Psoas muscle (tissue), 8 donors: ENCODE measurements at regions of chr10 and their contacts with region 1.

Region 1: DNA sequence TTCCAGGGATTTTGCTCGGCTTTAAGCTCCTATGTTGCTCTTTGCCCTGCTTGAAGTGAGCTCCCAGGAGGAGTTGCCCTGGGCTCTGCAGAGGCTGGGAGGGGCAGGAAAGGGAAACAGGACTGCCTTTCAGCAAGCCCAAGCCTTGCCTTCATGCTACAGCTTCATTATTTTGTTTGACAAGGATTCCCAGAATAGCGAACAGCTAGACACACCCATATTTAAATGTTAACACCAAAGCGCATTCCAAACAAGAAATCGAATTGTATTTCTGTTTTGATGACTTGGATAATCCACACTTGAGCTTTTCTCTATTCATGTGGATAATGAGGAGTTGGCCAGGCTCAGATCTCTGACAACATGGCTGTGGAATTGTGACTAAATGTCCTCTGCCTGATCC is 6.3 kb downstream of the KIAA1217 start:
- DNase-seq: no peak
- ATAC-seq: peak; percentile 5 to 17 (median 16)
- H3K4me3 ChIP-seq: peak overlapping the region; percentile 17
- H3K27ac ChIP-seq: peak overlapping the region; percentile 93
- H3K4me1 ChIP-seq: peaks cover 72% of the 10 kb centered on the region
- H3K27me3 ChIP-seq: no peaks in the 10 kb centered on the region
- CTCF ChIP-seq: no peak

Region 2: GRCh38 chr10:24249829-24250415 is 34.7 kb after region 1 on chr10:
- intact Hi-C with region 1: loop called (anchors 5 kb)
- DNase-seq: no peak
- ATAC-seq: peak; percentile 27 to 55 (median 40)
- H3K4me3 ChIP-seq: no peak overlapping the region
- H3K27ac ChIP-seq: peak overlapping the region; percentile 69
- H3K4me1 ChIP-seq: peaks cover 59% of the 10 kb centered on the region
- H3K27me3 ChIP-seq: no peaks in the 10 kb centered on the region
- CTCF ChIP-seq: no peak

Region 3: GRCh38 chr10:24318517-24318916 is 103.3 kb after region 1 on chr10:
- intact Hi-C with region 1: no loop called
- DNase-seq: no peak
- ATAC-seq: no peak
- H3K4me3 ChIP-seq: no peak overlapping the region
- H3K27ac ChIP-seq: no peak overlapping the region
- H3K4me1 ChIP-seq: peaks cover 20% of the 10 kb centered on the region
- H3K27me3 ChIP-seq: no peaks in the 10 kb centered on the region
- CTCF ChIP-seq: no peak

Region 4: DNA sequence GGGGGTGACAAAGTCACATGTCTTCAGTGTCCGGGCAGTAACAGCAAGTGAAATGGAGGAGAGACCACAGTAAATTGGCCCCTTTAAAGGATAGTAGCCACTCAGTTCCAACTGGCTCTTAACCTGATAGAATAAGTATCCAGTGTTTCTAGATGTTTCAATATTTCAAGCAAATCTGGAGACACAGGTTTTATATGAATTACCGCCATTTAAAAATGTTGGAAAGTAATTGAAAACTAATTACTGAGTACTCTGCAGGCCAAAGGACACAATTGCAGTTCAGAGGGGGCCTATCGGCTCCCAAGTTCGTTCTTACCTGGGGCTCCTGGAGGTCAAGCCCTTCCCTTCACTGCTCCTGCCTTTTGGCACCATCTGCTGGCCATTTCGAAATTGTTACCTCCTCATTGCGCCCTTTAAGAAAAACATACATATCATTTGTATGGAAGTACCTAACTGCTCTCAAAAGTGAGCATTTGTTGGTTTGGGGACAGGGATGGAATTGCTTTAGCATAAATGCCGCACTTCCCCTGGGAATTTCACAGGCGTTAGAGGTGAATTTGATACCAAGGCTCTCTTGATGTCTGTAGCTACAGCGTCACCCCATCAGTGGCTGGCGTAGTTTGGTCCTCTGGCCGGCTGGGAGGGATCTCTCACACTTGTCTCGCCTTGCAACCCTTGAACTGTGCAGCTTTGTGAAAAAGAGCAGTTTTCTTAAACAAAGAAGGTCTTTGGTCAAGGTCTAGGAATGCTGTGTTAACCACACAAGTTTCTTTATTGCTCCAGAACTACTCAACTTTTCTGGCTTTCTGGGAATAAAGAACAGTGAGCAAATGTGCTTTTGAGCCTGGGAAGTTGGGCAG is 288.5 kb after region 1 on chr10:
- intact Hi-C with region 1: loop called in 1 of 2 experiments (anchors 5 kb)
- DNase-seq: no peak
- ATAC-seq: peak in 3 of 4 donors; percentile 50 to 64 (median 58)
- H3K4me3 ChIP-seq: no peak overlapping the region
- H3K27ac ChIP-seq: no peak overlapping the region
- H3K4me1 ChIP-seq: no peaks in the 10 kb centered on the region
- H3K27me3 ChIP-seq: no peaks in the 10 kb centered on the region
- CTCF ChIP-seq: peak; percentile 49